Esophagus squamous epithelium (tissue), 5 donors: ENCODE measurements at regions of chr15 and their contacts with region 1.

Region 1: DNA sequence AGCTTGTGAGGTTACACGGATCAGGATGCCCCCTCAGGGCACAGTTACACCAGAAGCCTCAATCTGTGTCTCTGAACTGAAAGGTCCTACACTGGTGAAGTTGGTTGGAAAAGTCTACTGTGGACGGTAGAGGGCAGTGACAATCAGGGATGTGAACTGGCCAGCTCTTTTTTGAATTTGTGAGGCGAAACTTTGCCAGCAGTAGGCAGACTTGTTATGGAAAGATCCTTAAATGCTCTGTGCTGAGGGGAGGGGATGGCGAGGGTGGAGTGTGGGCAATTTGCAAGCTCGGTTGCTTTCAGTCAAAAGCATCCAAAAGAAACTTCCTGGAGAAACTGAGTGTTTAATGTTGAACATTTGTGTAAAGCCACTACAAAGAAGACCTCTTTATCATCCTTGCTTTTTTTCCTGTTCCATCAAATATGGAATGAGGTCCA is 127.4 kb upstream of the ABHD17C start:
- DNase-seq: no peak
- H3K4me3 ChIP-seq: no peak overlapping the region
- H3K27ac ChIP-seq: no peak overlapping the region
- H3K4me1 ChIP-seq: peaks cover 0 to 11% (median 4%) of the 10 kb centered on the region in 3 donors
- H3K27me3 ChIP-seq: no peaks in the 10 kb centered on the region
- CTCF ChIP-seq: peak; percentile 35 to 84 (median 78)
- POLR2A ChIP-seq: no peak

Region 2: DNA sequence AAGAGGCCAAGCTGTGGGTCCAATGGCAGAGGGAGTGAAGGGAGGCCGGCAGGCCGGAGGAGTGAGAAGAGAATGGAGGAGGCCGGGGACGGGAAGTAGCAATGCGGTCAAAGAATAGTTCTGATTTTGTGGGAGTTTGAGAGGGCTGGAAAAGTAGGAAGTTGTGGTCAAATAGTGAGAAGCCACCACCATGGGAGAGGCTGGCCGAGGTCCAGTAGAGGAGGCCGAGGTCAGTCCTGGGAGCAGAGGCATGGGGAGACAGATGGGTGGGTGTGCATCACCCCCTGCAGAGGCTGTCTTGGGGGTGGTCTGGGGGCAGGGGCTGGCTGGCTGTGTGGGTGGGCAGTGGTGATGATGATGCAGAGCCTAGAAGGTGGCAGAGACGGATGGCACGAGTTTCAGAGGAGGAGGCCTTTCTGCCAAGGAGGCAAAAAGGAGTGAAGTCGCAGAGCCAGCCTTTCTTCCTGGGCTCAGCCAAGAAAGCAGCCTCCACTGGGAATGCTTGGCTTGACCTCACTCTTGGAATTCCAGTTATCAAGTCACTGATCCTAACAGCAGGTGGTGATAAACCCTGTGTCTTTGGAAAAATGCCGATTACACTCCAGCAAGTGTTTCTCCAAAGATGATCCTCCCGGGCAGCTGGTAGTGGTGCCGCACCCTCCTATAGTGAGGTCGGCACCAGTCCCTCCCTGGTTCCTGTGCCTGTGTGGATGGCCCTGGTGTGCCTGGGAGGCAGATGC is 106.2 kb before region 1 on chr15:
- intact Hi-C with region 1: loop called (anchors 10 kb)
- DNase-seq: no peak
- H3K4me3 ChIP-seq: no peak overlapping the region
- H3K27ac ChIP-seq: no peak overlapping the region
- H3K4me1 ChIP-seq: no peaks in the 10 kb centered on the region
- H3K27me3 ChIP-seq: peaks cover 0 to 12% (median 0%) of the 10 kb centered on the region in 4 donors
- CTCF ChIP-seq: no peak
- POLR2A ChIP-seq: no peak

Region 3: DNA sequence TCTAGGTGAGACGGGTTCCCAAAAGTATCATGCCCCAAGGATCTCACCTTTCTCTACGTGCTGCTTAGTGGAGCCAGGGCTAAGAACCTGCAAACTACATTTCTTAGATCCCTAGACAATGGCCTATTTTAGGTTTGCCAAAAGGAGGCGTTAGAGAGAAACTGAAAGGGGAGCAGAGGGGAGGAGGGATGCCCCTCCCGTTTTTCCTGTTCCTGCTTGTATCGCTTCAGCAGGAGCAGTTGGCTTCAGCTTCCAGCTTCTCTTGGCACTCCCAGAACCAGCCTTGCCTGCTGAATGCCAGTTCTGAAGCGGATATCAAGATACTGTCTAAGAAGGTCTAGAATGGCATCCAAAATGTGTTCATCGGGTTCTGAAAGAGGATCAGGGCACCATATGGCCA is 68.9 kb after region 1 on chr15:
- intact Hi-C with region 1: loop called (anchors 5 kb)
- DNase-seq: no peak
- H3K4me3 ChIP-seq: no peak overlapping the region
- H3K27ac ChIP-seq: peak overlapping the region in 3 of 4 donors; percentile 32 to 51 (median 45)
- H3K4me1 ChIP-seq: peaks cover 0 to 19% (median 0%) of the 10 kb centered on the region in 3 donors
- H3K27me3 ChIP-seq: no peaks in the 10 kb centered on the region
- CTCF ChIP-seq: peak in 3 of 6 experiments; percentile 8 to 45 (median 28)
- POLR2A ChIP-seq: no peak

Region 4: DNA sequence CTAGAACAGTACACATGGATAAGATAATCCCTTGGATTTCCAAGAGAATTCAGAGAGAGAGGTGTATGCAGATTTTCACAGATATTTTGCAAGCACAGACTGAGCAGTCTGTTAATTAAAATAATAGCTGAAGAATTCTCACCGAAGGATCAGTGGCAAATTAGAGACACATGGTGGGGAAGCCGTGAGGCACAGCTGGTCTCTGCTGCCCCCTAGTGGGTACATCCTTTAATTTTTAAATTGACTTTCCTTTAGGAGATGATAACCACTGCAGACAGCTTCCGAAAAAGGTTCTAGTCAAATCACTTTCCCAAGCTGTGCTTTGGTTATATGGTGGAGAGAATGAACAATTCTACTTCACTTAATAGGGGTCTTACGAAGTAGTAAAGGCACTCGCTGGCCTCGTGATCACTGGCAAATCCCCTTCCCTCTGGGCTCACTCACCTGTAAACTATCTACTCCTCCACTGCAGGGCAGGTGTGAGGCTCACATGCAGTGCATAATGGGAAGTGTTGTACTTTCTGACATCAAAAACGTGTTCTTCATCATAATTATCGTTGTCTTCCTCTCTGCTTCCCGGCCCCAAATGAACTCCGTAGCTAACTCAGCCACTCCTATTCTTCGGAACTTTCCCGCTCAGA is 402.4 kb after region 1 on chr15:
- intact Hi-C with region 1: loop called (anchors 10 kb)
- DNase-seq: no peak
- H3K4me3 ChIP-seq: no peak overlapping the region
- H3K27ac ChIP-seq: no peak overlapping the region
- H3K4me1 ChIP-seq: peaks cover 0 to 20% (median 4%) of the 10 kb centered on the region in 3 donors
- H3K27me3 ChIP-seq: no peaks in the 10 kb centered on the region
- CTCF ChIP-seq: peak; percentile 75 to 90 (median 84)
- POLR2A ChIP-seq: no peak